Transverse colon (tissue), 4 donors: ENCODE measurements at regions of chr20 and their contacts with region 1.

Region 1: DNA sequence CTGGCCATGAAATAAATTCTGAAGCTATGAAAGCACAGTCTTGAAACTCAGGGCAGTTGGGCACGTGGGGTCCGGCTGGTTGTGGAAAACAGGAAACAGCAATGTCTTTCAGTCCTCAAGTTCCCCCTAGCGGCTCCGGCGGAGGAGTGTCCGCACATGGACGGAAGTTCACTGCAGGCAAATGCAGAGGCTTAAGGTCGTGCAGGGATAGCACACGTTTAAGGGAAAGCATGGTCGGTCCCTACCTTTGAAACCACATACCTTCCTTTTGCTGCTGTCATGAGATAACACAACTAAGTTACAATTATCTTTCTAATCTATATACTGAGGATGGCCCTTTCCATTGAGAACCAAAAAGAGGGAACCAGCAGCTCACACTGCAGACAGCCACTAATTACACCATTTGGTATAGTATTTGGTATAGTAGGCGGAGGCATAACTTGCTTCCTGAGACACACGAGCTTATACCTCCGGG is 52.6 kb upstream of the NFATC2 start:
- DNase-seq: peak; percentile 87
- H3K4me3 ChIP-seq: no peak overlapping the region
- H3K27ac ChIP-seq: peak overlapping the region in 2 of 4 donors; percentile 24 to 41
- H3K4me1 ChIP-seq: peaks cover 0 to 16% (median 3%) of the 10 kb centered on the region in 4 donors
- H3K27me3 ChIP-seq: no peaks in the 10 kb centered on the region
- CTCF ChIP-seq: peak; percentile 76 to 87 (median 81)
- EP300 ChIP-seq: no peak
- POLR2A ChIP-seq: no peak

Region 2: GRCh38 chr20:51372176-51372803 is 222.8 kb before region 1 on chr20:
- in situ Hi-C with region 1: loop called (anchors 5 to 25 kb)
- intact Hi-C with region 1: loop called (anchors 5 kb)
- DNase-seq: peak; percentile 60
- H3K4me3 ChIP-seq: no peak overlapping the region
- H3K27ac ChIP-seq: no peak overlapping the region
- H3K4me1 ChIP-seq: no peaks in the 10 kb centered on the region
- H3K27me3 ChIP-seq: no peaks in the 10 kb centered on the region
- CTCF ChIP-seq: peak; percentile 66 to 72 (median 70)
- EP300 ChIP-seq: no peak
- POLR2A ChIP-seq: no peak

Region 3: DNA sequence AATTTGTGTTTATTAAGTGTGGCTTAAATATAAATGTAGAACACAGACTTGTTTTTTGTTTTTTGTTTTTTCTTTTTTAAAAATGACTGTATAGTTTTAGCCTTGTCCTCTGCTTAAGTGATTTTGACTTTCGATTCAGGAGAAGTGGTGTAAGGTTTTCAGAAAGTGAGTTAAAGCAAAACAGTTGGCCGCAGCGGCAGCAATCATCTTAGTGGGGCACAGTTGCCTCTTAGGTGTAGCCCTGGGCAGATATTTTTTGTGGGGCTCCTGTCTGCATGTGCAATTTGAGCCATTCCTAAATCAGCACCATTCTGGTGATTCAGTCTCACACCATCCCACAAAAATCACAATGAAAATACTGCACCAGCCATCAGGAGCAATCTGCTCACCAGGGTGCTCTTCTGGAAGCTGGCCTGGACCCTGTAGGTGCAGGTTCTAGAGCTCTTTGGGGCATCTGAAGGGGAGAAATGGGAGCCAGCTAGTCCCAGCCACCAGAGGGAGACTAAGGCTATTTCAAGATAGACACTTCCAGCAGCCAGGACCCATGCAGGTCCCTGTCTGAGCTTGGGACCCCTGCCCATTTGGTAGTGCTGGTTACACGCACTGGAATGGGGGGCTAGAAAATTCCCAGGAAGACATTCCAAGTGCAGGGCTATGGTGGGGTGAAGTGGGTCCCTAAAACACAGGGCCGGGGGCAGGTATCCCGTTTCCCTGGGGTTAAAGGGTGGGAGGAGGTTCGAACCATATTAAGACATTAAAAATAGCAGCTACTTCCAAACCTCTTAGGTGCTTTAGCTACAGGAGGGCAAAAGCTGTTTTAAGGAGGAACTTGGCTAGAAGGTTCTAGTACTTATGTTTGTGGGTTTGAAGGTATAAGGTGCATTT is 209.2 kb before region 1 on chr20:
- in situ Hi-C with region 1: loop called in 1 of 4 experiments (anchors 25 kb)
- intact Hi-C with region 1: loop called (anchors 5 kb)
- DNase-seq: peak; percentile 28
- H3K4me3 ChIP-seq: no peak overlapping the region
- H3K27ac ChIP-seq: no peak overlapping the region
- H3K4me1 ChIP-seq: peaks cover 0 to 12% (median 6%) of the 10 kb centered on the region in 4 donors
- H3K27me3 ChIP-seq: no peaks in the 10 kb centered on the region
- CTCF ChIP-seq: peak; percentile 19 to 38 (median 33)
- EP300 ChIP-seq: no peak
- POLR2A ChIP-seq: no peak